H1 (cell line): ENCODE measurements at regions of chr12 and their contacts with region 1.

Region 1: DNA sequence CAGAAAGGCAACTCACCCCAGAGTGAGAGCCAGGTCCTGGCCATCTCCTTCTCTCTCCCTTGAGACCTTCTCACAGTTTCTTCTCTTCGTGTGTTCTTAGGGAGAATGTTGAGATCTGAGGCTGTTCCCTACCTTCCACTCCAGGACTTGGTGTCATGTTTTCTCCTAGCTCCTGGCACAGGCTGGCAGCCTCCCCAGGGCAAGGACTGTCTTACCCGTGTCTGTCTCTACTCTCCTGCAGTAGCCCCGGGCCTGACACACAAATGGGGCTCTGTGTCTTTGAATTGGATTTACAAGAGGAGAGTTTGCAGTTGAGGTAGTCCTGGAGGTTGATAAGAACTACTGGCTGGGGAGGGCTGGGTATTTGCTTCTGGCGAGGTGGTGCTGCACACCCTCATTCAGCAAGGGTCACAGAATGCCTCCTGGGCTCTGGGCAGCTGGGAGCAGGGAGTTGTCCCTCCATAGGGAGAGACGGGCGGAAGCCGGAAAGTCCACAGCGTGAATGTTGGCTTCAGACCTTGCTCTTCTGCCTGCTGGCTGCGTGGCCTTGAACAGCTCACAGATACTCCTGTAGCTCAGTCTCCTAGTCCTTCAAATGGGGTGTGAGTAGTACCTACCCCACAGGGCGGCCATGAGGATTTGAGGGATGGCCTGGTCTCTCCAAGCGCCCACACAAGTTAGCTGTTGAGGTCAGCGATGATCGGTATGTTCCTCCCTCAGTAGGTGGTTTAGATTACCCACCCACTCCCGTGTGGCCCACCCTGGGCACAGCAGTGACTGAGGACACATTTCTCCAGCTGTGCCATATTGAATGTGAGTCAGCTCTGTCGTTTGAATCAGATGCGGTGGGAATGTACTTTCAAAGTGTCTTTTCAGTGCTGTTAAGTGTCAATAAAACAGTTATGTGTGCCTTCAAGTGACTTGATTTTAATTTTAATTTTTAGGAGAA is 10.2 kb downstream of the EP400 start:
- DNase-seq: no peak
- H3K4me3 ChIP-seq: no peak overlapping the region
- H3K27ac ChIP-seq: no peak overlapping the region
- H3K4me1 ChIP-seq: peaks cover 0 to 7% (median 0%) of the 10 kb centered on the region in 4 experiments; a peak in 2 of 7 replicates
- H3K27me3 ChIP-seq: no peaks in the 10 kb centered on the region
- CTCF ChIP-seq: no peak
- EP300 ChIP-seq: no peak
- POLR2A ChIP-seq: no peak
- RAD21 ChIP-seq: no peak

Region 2: DNA sequence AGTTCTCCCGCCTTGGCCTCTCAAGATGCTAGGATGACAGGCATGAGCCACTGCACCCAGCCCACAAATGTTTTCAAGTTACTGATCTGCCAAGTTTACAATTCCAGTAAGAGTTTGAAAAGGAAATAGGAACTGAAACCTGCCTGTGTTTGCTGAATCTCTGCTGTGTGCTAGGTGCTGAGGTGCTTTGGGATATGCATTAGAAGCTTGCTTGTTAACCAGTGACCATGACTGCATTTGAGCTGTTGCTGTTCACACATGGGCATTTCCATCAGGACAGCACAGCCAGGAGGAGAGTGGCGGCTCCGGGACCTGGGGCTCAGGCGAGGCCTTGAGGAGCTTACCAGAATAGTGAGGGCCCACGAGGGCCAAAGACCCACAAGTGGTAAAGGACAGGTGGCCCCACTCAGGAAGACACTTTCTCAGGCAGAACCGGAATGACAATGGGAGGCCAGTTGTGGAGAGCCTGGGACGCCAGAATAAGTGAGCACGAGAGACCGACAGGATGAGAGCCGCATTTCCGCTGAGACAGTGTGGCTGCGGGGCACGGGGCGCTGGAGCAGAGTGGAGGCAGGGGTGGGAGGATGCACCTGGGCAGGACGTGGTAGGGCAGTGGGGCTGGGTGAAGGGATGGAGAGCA is 186.2 kb before region 1 on chr12:
- CTCF ChIA-PET with region 1: no interaction called
- POLR2A ChIA-PET with region 1: no interaction called
- DNase-seq: no peak
- H3K4me3 ChIP-seq: no peak overlapping the region
- H3K27ac ChIP-seq: no peak overlapping the region
- H3K4me1 ChIP-seq: peaks cover 9 to 28% (median 18%) of the 10 kb centered on the region in 4 experiments
- H3K27me3 ChIP-seq: no peaks in the 10 kb centered on the region
- CTCF ChIP-seq: no peak
- EP300 ChIP-seq: no peak
- POLR2A ChIP-seq: no peak
- RAD21 ChIP-seq: no peak

Region 3: GRCh38 chr12:131938082-131938481 is 21.8 kb before region 1 on chr12:
- CTCF ChIA-PET with region 1: interaction called, 5 read pairs
- POLR2A ChIA-PET with region 1: interaction called, 13 read pairs
- DNase-seq: no peak
- H3K4me3 ChIP-seq: no peak overlapping the region
- H3K27ac ChIP-seq: no peak overlapping the region
- H3K4me1 ChIP-seq: no peaks in the 10 kb centered on the region
- H3K27me3 ChIP-seq: no peaks in the 10 kb centered on the region
- CTCF ChIP-seq: no peak
- EP300 ChIP-seq: no peak
- POLR2A ChIP-seq: no peak
- RAD21 ChIP-seq: no peak

Region 4: GRCh38 chr12:132046561-132046960 is 86.6 kb after region 1 on chr12:
- CTCF ChIA-PET with region 1: no interaction called
- POLR2A ChIA-PET with region 1: no interaction called
- DNase-seq: no peak
- H3K4me3 ChIP-seq: no peak overlapping the region
- H3K27ac ChIP-seq: peak overlapping the region; percentile 26; the same call in 1 of the 2 replicates
- H3K4me1 ChIP-seq: peaks cover 2 to 5% (median 3%) of the 10 kb centered on the region in 4 experiments; a peak in 6 of 7 replicates
- H3K27me3 ChIP-seq: no peaks in the 10 kb centered on the region
- CTCF ChIP-seq: no peak
- EP300 ChIP-seq: no peak
- POLR2A ChIP-seq: no peak
- RAD21 ChIP-seq: no peak